Common myeloid progenitor, CD34-positive (primary cell): ENCODE measurements at regions of chr9 and their contacts with region 1.

Region 1: DNA sequence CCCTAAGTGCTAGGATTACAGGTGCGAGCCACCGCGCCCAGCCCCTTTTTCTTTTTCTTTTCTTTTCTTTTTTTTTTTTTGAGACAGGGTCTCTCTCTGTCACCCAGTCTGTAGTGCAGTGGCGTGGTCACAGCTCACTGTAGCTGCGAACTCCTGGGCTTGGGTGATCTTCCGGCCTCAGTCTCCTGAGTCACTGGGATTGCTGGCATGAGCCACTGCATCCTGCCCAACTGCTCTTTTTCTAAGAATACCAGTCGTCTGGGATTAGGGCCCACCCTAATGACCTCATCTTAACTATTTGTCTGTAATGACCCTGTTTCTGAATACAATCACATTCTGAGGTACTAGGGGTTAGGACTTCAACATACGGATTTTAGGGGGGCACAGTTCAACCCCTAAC is 34.1 kb upstream of the NANS start:
- DNase-seq: no peak
- H3K4me3 ChIP-seq: no peak overlapping the region
- H3K27ac ChIP-seq: no peak overlapping the region
- H3K4me1 ChIP-seq: peaks cover 0 to 5% (median 0%) of the 10 kb centered on the region in 4 experiments
- H3K27me3 ChIP-seq: no peaks in the 10 kb centered on the region

Region 2: DNA sequence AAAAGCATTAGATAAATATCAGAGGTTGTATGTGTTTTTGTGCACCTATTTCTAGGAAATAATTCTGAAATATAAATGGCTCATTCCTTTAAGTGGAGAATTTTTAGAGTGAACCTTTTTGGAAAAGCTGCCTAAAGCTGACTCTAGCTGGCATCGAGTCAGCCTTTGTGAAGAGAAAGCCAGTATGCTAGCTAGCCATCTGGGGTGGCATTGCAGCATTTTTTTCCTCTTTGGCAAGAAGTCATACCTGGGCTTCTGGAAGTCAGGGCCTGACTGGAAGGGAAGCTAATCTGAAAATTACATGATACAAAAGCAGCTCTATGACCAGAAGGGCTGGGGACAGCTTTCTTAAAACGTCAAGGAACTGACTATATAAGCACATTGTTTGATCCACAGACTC is 19.6 kb before region 1 on chr9:
- CTCF ChIA-PET with region 1: interaction called, 11 read pairs
- POLR2A ChIA-PET with region 1: no interaction called
- DNase-seq: no peak
- H3K4me3 ChIP-seq: no peak overlapping the region
- H3K27ac ChIP-seq: peak overlapping the region in 1 of 2 experiments; percentile 15
- H3K4me1 ChIP-seq: no peaks in the 10 kb centered on the region
- H3K27me3 ChIP-seq: no peaks in the 10 kb centered on the region